GM23248 (cell line): ENCODE measurements at regions of chr18 and their contacts with region 1.

Region 1: GRCh38 chr18:74551936-74552555 is 17.7 kb downstream of the CNDP1 start:
- DNase-seq: peak; percentile 88
- H3K4me3 ChIP-seq: no peak overlapping the region
- H3K27ac ChIP-seq: no peak overlapping the region
- H3K4me1 ChIP-seq: peaks cover 4% of the 10 kb centered on the region
- H3K27me3 ChIP-seq: peaks cover 19% of the 10 kb centered on the region; the same call in 1 of the 2 replicates

Region 2: GRCh38 chr18:74291771-74292540 is 260.1 kb before region 1 on chr18 and contains the start of gene CYB5A:
- in situ Hi-C with region 1: no loop called
- DNase-seq: peak; percentile 97
- H3K4me3 ChIP-seq: peak within 1 kb of the TSS; percentile 81
- H3K27ac ChIP-seq: 0 out of 2 replicates have a peak within 1 kb of the TSS, but pooled peaks have one; percentile 0
- H3K4me1 ChIP-seq: peaks cover 23% of the 10 kb centered on the region
- H3K27me3 ChIP-seq: no peaks in the 10 kb centered on the region
- total RNA-seq, gene CYB5A: 21.5 and 55.0 TPM in 2 replicates

Region 3: GRCh38 chr18:74353169-74353775 is 198.8 kb before region 1 on chr18:
- in situ Hi-C with region 1: loop called (anchors 5 kb)
- DNase-seq: peak; percentile 87
- H3K4me3 ChIP-seq: no peak overlapping the region
- H3K27ac ChIP-seq: no peak overlapping the region
- H3K4me1 ChIP-seq: peaks cover 13% of the 10 kb centered on the region
- H3K27me3 ChIP-seq: peaks cover 40% of the 10 kb centered on the region